Endothelial cell of umbilical vein (primary cell): ENCODE measurements at regions of chr7 and their contacts with region 1.

Region 1: DNA sequence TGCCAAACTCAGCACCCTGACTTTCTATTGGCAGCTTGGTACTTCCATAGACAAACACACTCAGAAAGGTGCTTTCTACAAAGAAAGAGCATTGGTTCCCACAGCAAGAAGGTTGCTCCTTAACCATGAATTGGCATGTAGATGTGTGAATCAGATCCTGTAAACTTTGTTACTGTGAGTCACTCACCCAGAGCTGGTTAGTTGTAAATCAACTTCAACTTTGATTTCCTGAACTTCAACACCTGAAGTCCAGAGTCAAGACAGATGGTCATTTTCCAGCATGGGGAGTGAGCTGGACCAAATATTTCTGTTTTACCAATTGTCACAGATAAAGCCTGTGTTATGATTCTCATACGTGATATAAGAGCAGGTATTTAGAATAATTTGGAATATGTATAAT is 797.2 kb downstream of the TNS3 start:
- DNase-seq: peak; percentile 91
- H3K4me3 ChIP-seq: no peak overlapping the region
- H3K27ac ChIP-seq: peak overlapping the region; percentile 45
- H3K4me1 ChIP-seq: peaks cover 13% of the 10 kb centered on the region
- H3K27me3 ChIP-seq: no peaks in the 10 kb centered on the region
- CTCF ChIP-seq: no peak
- POLR2A ChIP-seq: no peak

Region 2: GRCh38 chr7:46839651-46840050 is 54.9 kb after region 1 on chr7:
- CTCF ChIA-PET with region 1: no interaction called
- POLR2A ChIA-PET with region 1: no interaction called
- dilution Hi-C with region 1: no loop called
- intact Hi-C with region 1: loop called (anchors 2 kb)
- DNase-seq: peak; percentile 64
- H3K4me3 ChIP-seq: no peak overlapping the region
- H3K27ac ChIP-seq: no peak overlapping the region
- H3K4me1 ChIP-seq: peaks cover 4% of the 10 kb centered on the region
- H3K27me3 ChIP-seq: no peaks in the 10 kb centered on the region
- CTCF ChIP-seq: no peak
- POLR2A ChIP-seq: no peak

Region 3: GRCh38 chr7:46881507-46882127 is 96.9 kb after region 1 on chr7:
- CTCF ChIA-PET with region 1: no interaction called
- POLR2A ChIA-PET with region 1: no interaction called
- dilution Hi-C with region 1: no loop called
- intact Hi-C with region 1: loop called (anchors 5 kb)
- DNase-seq: peak; percentile 29
- H3K4me3 ChIP-seq: no peak overlapping the region
- H3K27ac ChIP-seq: peak overlapping the region; percentile 66
- H3K4me1 ChIP-seq: peaks cover 30% of the 10 kb centered on the region
- H3K27me3 ChIP-seq: no peaks in the 10 kb centered on the region
- CTCF ChIP-seq: no peak
- POLR2A ChIP-seq: no peak

Region 4: DNA sequence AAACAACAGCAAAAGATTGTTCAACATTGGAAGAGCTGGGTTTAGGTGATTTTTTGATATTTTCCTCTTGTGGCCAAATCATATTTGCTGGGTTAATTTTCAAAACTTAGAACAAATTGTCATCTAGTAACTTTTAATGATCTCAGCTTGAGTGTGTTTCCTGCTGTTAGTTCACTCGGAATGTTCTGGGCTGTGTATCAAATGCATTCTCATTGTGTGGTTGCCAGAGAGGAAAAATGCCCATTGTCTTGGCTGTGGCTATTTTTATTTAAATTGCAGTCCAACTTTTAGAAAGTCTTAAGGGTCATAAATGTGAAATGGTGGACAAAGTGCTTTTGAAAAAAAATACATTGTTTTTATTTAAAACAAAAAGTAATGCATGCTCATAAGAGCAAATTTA is 255.2 kb after region 1 on chr7:
- CTCF ChIA-PET with region 1: no interaction called
- POLR2A ChIA-PET with region 1: no interaction called
- dilution Hi-C with region 1: no loop called
- intact Hi-C with region 1: loop called (anchors 5 kb)
- DNase-seq: peak; percentile 97
- H3K4me3 ChIP-seq: no peak overlapping the region
- H3K27ac ChIP-seq: peak overlapping the region; percentile 61
- H3K4me1 ChIP-seq: peaks cover 24% of the 10 kb centered on the region
- H3K27me3 ChIP-seq: no peaks in the 10 kb centered on the region
- CTCF ChIP-seq: no peak
- POLR2A ChIP-seq: peak; percentile 32

Region 5: DNA sequence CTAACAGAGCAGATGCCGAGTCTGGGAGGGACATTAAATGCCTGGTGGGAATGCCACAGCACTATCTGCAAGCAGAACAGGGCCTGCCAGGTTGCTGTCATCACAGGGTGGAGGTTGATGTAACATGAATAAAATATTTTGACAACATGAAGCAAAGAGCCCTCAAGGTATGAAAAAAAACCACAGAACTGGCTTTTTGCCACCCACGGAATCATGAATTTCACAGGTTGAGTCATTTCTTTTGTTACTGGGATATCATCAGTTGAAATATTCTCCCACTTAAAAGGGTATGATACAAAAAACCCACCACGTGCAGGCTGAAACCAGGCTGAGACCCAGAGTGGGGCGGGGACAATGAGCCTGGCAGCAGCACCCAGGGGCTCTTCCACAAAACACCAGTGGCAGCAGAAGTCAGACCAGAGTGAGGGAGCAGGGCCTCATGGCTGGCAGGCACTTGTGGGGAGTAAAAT is 577.0 kb after region 1 on chr7:
- CTCF ChIA-PET with region 1: no interaction called
- POLR2A ChIA-PET with region 1: no interaction called
- dilution Hi-C with region 1: no loop called
- intact Hi-C with region 1: no loop called
- DNase-seq: no peak
- H3K4me3 ChIP-seq: no peak overlapping the region
- H3K27ac ChIP-seq: no peak overlapping the region
- H3K4me1 ChIP-seq: no peaks in the 10 kb centered on the region
- H3K27me3 ChIP-seq: no peaks in the 10 kb centered on the region
- CTCF ChIP-seq: no peak
- POLR2A ChIP-seq: no peak